GM12878 (cell line): ENCODE measurements at regions of chr11 and their contacts with region 1.

Region 1: GRCh38 chr11:18775492-18776292 is 15.9 kb downstream of the PTPN5 start:
- DNase-seq: no peak
- ATAC-seq: peak; percentile 94
- H3K4me3 ChIP-seq: no peak overlapping the region
- H3K27ac ChIP-seq: no peak overlapping the region
- H3K4me1 ChIP-seq: peaks cover 5% of the 10 kb centered on the region
- H3K27me3 ChIP-seq: no peaks in the 10 kb centered on the region; a peak in 1 of 4 replicates
- CTCF ChIP-seq: peak; percentile 81 to 92 (median 92)
- EP300 ChIP-seq: no peak
- POLR2A ChIP-seq: no peak
- RAD21 ChIP-seq: peak; percentile 70

Region 2: GRCh38 chr11:18791207-18791968 is 15.7 kb after region 1 on chr11 and contains the start of gene PTPN5:
- CTCF ChIA-PET with region 1: interaction called, 310 read pairs
- POLR2A ChIA-PET with region 1: interaction called, 5 read pairs
- RAD21 ChIA-PET with region 1: interaction called, 34 read pairs
- SMC1A ChIA-PET with region 1: interaction called, 174 read pairs
- in situ Hi-C with region 1: no loop called
- intact Hi-C with region 1: no loop called
- DNase-seq: no peak
- ATAC-seq: peak; percentile 32; the same call in 2 of the 3 replicates
- H3K4me3 ChIP-seq: no peak within 1 kb of the TSS
- H3K27ac ChIP-seq: no peak within 1 kb of the TSS
- H3K4me1 ChIP-seq: no peaks in the 10 kb centered on the region
- H3K27me3 ChIP-seq: peaks cover 9 to 15% of the 10 kb centered on the region in 2 experiments
- CTCF ChIP-seq: no peak
- EP300 ChIP-seq: no peak
- POLR2A ChIP-seq: no peak
- RAD21 ChIP-seq: no peak
- polyA plus RNA-seq, gene PTPN5: not detected

Region 3: GRCh38 chr11:18802381-18803257 is 26.9 kb after region 1 on chr11:
- CTCF ChIA-PET with region 1: interaction called, 310 read pairs
- POLR2A ChIA-PET with region 1: interaction called, 4 read pairs
- RAD21 ChIA-PET with region 1: interaction called, 34 read pairs
- SMC1A ChIA-PET with region 1: interaction called, 174 read pairs
- in situ Hi-C with region 1: no loop called
- intact Hi-C with region 1: loop called (anchors 1 kb)
- DNase-seq: peak; percentile 12
- ATAC-seq: peak; percentile 80
- H3K4me3 ChIP-seq: no peak overlapping the region
- H3K27ac ChIP-seq: no peak overlapping the region
- H3K4me1 ChIP-seq: no peaks in the 10 kb centered on the region
- H3K27me3 ChIP-seq: peaks cover 0 to 9% of the 10 kb centered on the region in 2 experiments; a peak in 2 of 4 replicates
- CTCF ChIP-seq: peak; percentile 53 to 73 (median 71); a peak in 5 of 6 replicates
- EP300 ChIP-seq: no peak
- POLR2A ChIP-seq: no peak
- RAD21 ChIP-seq: peak; percentile 65

Region 4: DNA sequence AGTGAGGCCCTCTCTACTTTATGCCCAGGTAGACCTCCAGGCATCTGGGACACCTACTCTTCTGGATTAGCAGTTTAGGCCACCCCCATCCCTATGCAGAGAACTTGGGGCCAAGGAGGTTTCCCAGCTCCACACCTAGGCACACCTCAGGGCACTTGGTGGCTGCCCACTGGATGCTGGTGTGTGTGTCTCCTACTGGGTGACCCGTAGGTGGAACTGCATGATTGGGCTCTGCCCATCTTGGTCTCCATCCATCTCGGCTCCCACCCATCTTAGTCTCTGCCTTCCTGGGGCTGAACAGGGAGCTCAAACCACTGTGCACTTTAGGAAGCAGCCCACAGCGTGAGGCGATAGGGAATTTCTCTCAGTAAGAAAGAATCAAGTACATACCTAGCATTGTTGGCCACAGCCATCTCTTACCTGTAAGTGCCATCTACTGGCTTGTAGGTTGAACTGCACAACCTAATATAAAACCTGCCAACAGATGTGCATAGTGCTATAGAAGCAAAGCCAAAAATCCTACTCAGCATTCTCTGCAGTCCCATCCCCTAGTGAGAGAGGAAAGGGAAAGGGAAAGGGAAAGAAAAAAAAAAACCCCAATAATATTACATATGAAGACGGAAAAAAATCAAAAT is 77.5 kb after region 1 on chr11:
- CTCF ChIA-PET with region 1: interaction called, 40 read pairs
- POLR2A ChIA-PET with region 1: no interaction called
- RAD21 ChIA-PET with region 1: interaction called, 3 read pairs
- SMC1A ChIA-PET with region 1: interaction called, 4 read pairs
- in situ Hi-C with region 1: no loop called
- intact Hi-C with region 1: loop called (anchors 1 kb)
- DNase-seq: no peak
- ATAC-seq: peak; percentile 97
- H3K4me3 ChIP-seq: no peak overlapping the region
- H3K27ac ChIP-seq: no peak overlapping the region
- H3K4me1 ChIP-seq: no peaks in the 10 kb centered on the region
- H3K27me3 ChIP-seq: no peaks in the 10 kb centered on the region
- CTCF ChIP-seq: peak; percentile 61 to 76 (median 65)
- EP300 ChIP-seq: no peak
- POLR2A ChIP-seq: no peak
- RAD21 ChIP-seq: peak; percentile 65

Region 5: DNA sequence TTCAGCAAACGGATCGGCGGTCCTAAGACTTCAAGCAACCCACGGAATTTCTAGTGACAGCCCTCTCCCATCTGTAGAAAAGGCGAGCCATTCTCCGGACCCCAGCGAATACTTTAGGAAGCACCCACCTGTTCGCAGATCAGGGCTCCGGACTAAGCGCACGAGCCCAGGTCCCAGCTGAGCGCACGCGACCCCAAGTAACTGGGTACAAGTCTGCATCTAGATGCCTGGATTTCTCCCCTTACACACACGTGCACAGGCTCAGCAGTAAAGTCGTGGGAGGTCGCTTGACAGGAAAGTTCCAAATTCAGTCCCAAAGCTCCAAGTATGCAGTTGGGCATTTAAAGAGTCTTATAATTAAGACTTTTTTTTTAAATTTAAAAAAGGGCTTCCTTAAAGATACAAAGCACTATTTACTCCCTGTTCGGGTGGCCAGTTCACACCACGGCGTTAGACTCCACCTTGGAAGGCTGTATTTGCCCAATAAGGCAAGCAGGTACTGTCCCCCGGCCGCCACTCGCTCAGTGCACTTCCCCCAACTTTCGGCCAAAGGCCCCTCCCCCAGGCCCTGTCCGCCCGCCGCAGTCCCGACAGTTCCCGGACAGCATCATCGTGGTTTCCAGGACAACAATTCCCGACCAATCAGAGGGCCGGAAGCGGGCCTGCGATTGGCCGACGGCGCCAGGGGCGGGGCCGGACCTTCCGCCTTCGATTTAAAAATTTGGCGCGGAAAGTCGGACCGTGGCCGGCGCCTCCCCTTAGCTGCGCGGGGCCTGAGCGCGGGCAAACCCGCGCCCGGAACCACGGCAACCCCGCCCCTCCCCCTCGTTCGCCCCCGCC is 464.9 kb after region 1 on chr11 and contains the start of gene E2F8:
- CTCF ChIA-PET with region 1: no interaction called
- POLR2A ChIA-PET with region 1: no interaction called
- RAD21 ChIA-PET with region 1: no interaction called
- SMC1A ChIA-PET with region 1: no interaction called
- in situ Hi-C with region 1: no loop called
- intact Hi-C with region 1: no loop called
- DNase-seq: peak; percentile 88
- ATAC-seq: peak; percentile 87
- H3K4me3 ChIP-seq: peak within 1 kb of the TSS; percentile 92
- H3K27ac ChIP-seq: peak within 1 kb of the TSS; percentile 91
- H3K4me1 ChIP-seq: peaks cover 22% of the 10 kb centered on the region
- H3K27me3 ChIP-seq: no peaks in the 10 kb centered on the region
- CTCF ChIP-seq: no peak
- EP300 ChIP-seq: peak in 1 of 2 experiments; percentile 64; a peak in 1 of 4 replicates
- POLR2A ChIP-seq: peak; percentile 20; the same call in 1 of the 2 replicates
- RAD21 ChIP-seq: no peak
- polyA plus RNA-seq, gene E2F8: 8.8 to 9.2 TPM